Heart left ventricle (tissue), 16 donors: ENCODE measurements at regions of chr1 and their contacts with region 1.

Region 1: GRCh38 chr1:87335175-87335884 is 6.7 kb downstream of the LMO4 start:
- DNase-seq: peak; percentile 75 to 90 (median 83)
- ATAC-seq: peak; percentile 17 to 80 (median 76)
- H3K4me3 ChIP-seq: peak overlapping the region; percentile 40 to 88 (median 74)
- H3K27ac ChIP-seq: peak overlapping the region; percentile 20 to 88 (median 80)
- H3K4me1 ChIP-seq: peaks cover 3 to 65% (median 37%) of the 10 kb centered on the region in 12 donors
- H3K27me3 ChIP-seq: no peaks in the 10 kb centered on the region
- CTCF ChIP-seq: peak in 10 of 12 donors; percentile 13 to 65 (median 46)
- POLR2A ChIP-seq: no peak

Region 2: DNA sequence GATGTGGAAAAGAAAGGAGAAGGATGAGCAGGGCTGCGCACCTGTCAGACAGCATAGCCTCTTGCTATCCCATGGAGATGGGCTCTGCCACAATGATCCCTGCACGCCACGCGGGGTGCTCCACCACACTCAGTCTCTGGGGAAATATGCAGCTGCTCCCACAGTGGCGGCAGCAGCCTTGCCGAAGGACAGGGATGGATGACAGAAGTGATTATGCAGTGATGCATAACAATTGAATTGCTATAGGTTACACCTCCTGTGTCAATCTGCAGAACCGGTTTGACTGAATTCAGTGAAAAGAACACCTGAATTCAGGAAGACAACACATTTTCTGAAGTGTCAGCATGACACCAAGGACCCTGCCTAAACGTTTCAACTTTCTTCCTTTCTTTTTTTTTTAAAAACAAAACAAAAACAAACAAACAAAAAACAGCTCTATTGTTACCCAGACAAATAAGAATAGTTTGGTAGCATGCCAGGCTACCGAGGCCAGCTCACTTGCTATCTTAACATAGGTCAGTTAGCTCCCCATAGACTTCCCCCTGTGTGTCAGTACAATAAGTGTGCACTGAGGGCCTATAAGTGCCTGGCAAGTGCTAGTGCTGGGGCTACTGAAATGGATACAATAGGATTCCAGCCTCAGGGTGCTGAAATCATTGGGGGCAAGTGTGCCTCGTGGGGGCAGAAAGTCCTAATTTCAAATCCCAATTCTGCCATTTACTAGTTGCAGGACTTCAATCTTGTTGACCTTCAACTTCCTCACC is 134.3 kb before region 1 on chr1:
- intact Hi-C with region 1: no loop called
- DNase-seq: no peak
- ATAC-seq: no peak
- H3K4me3 ChIP-seq: no peak overlapping the region
- H3K27ac ChIP-seq: no peak overlapping the region
- H3K4me1 ChIP-seq: no peaks in the 10 kb centered on the region
- H3K27me3 ChIP-seq: peaks cover 0 to 8% (median 0%) of the 10 kb centered on the region in 9 donors
- CTCF ChIP-seq: no peak
- POLR2A ChIP-seq: no peak

Region 3: GRCh38 chr1:87226341-87226760 is 109.0 kb before region 1 on chr1:
- intact Hi-C with region 1: no loop called
- DNase-seq: peak; percentile 46 to 77 (median 72)
- ATAC-seq: peak in 3 of 4 donors; percentile 73 to 92 (median 85)
- H3K4me3 ChIP-seq: no peak overlapping the region
- H3K27ac ChIP-seq: peak overlapping the region in 4 of 12 donors; percentile 45 to 76 (median 61)
- H3K4me1 ChIP-seq: peaks cover 0 to 13% (median 0%) of the 10 kb centered on the region in 12 donors
- H3K27me3 ChIP-seq: no peaks in the 10 kb centered on the region
- CTCF ChIP-seq: no peak
- POLR2A ChIP-seq: no peak

Region 4: GRCh38 chr1:87826681-87827251 is 491.4 kb after region 1 on chr1:
- intact Hi-C with region 1: loop called in 1 of 10 experiments (anchors 10 kb)
- DNase-seq: peak in 4 of 5 donors; percentile 22 to 69 (median 58)
- ATAC-seq: peak; percentile 69 to 93 (median 90)
- H3K4me3 ChIP-seq: peak overlapping the region in 8 of 12 donors; percentile 3 to 53 (median 28)
- H3K27ac ChIP-seq: peak overlapping the region in 5 of 12 donors; percentile 21 to 48 (median 36)
- H3K4me1 ChIP-seq: peaks cover 0 to 8% (median 0%) of the 10 kb centered on the region in 12 donors
- H3K27me3 ChIP-seq: no peaks in the 10 kb centered on the region
- CTCF ChIP-seq: no peak
- POLR2A ChIP-seq: no peak